ENCODE measurements at regions of chr17 and their contacts with region 1.

Region 1: GRCh38 chr17:1752425-1753262 is 9.2 kb upstream of the SERPINF1 start:
- DNase-seq: no peak
- ATAC-seq: peak; percentile 60
- H3K4me3 ChIP-seq: no peak overlapping the region
- H3K27ac ChIP-seq: peak overlapping the region; percentile 51; the same call in 1 of the 2 replicates
- H3K4me1 ChIP-seq: peaks cover 5% of the 10 kb centered on the region; the same call in 1 of the 2 replicates
- H3K27me3 ChIP-seq: no peaks in the 10 kb centered on the region
- CTCF ChIP-seq: no peak

Region 2: DNA sequence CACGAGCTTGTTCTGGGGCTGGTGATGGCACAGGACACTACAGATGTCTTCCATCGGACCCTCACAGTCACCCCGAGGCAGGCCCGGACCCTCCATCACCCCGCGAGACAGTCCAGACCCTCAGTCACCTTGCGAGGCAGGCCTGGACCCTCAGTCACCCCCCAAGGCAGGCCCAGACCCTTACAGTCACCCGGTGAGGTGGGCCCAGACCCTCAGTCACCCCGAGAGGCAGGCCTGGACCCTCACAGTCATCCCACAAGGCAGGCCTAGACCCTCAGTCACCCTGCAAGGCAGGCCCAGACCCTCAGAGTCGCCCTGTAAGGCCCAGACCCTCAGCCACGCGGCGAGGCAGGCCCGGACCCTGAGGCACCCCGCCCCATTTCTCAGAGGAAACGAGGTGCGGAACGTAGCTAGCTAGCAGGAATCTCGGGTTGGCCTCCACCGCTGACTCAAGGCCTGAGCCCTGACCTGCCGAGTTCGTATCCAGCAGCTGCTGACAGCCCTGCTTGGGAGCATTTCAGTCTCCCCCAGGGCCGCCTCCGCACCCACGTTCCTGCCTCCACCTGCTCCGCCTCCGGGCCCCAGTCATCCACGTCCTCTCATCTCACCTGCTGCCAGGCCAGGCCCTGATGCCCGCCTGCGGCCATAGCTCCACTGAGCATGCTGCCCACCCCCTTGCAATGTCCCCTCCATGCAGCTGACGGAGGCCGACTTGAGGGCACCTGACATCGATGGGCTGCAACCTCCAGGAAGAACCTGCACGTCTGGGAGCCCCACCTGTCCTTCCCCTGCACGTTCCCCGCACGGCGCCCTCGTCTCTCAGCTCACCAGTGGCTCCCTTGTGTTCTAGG is 1428.7 kb before region 1 on chr17:
- CTCF ChIA-PET with region 1: no interaction called
- POLR2A ChIA-PET with region 1: interaction called, 10 read pairs
- in situ Hi-C with region 1: no loop called
- intact Hi-C with region 1: no loop called
- DNase-seq: no peak
- ATAC-seq: no peak
- H3K4me3 ChIP-seq: no peak overlapping the region
- H3K27ac ChIP-seq: no peak overlapping the region
- H3K4me1 ChIP-seq: no peaks in the 10 kb centered on the region
- H3K27me3 ChIP-seq: no peaks in the 10 kb centered on the region
- CTCF ChIP-seq: no peak

Region 3: GRCh38 chr17:1617620-1618174 is 134.9 kb before region 1 on chr17:
- CTCF ChIA-PET with region 1: no interaction called
- POLR2A ChIA-PET with region 1: no interaction called
- in situ Hi-C with region 1: no loop called
- intact Hi-C with region 1: no loop called
- DNase-seq: no peak
- ATAC-seq: no peak
- H3K4me3 ChIP-seq: no peak overlapping the region
- H3K27ac ChIP-seq: no peak overlapping the region
- H3K4me1 ChIP-seq: no peaks in the 10 kb centered on the region
- H3K27me3 ChIP-seq: no peaks in the 10 kb centered on the region
- CTCF ChIP-seq: no peak

Region 4: DNA sequence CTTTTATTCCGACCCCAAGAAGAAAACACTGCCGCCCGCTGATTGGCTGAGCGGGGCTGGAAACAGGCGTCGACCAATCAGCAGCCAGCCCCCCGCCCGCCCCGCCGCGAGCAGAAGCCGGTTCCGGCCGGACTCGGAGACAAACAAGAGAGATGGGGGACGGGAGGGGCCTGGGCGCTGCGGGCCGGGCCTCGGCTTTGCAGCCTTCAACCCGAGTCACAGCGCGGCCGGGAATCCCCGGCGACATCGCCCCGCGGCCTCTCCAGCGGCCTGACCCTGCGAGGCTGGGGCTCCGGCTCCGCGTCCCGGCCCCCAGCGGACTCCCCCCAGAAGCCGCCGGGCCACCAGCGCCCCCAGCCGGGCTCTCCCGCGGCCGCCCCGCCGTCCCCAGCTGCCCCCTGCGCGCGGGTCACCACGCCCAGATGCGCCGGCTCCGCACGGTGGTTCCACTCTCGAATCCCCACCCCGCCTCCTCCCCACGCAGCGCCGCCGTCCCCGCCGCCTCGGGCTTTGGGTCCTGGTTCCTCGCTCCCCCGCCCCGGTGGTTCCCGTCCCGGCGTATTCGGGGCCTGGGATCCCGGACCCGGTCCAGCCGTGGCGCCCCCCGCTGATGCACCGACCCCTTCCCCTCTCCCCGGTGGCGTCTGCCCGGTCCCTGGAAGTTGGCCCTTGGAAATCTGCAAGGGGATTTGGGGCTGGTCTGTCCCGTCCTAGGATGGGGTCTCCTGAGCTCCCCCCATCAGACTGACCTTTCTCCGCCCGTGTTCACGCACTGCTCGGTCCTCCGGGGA is 123.6 kb before region 1 on chr17:
- CTCF ChIA-PET with region 1: no interaction called
- POLR2A ChIA-PET with region 1: no interaction called
- in situ Hi-C with region 1: no loop called
- intact Hi-C with region 1: no loop called
- DNase-seq: no peak
- ATAC-seq: peak; percentile 92
- H3K4me3 ChIP-seq: peak overlapping the region; percentile 68
- H3K27ac ChIP-seq: peak overlapping the region; percentile 44
- H3K4me1 ChIP-seq: peaks cover 8% of the 10 kb centered on the region
- H3K27me3 ChIP-seq: no peaks in the 10 kb centered on the region
- CTCF ChIP-seq: peak; percentile 79; the same call in 1 of the 2 replicates

Region 5: GRCh38 chr17:1776328-1776727 is 23.7 kb after region 1 on chr17:
- CTCF ChIA-PET with region 1: no interaction called
- POLR2A ChIA-PET with region 1: no interaction called
- in situ Hi-C with region 1: no loop called
- intact Hi-C with region 1: no loop called
- DNase-seq: no peak
- ATAC-seq: no peak
- H3K4me3 ChIP-seq: no peak overlapping the region
- H3K27ac ChIP-seq: no peak overlapping the region
- H3K4me1 ChIP-seq: peaks cover 3% of the 10 kb centered on the region; the same call in 1 of the 2 replicates
- H3K27me3 ChIP-seq: no peaks in the 10 kb centered on the region
- CTCF ChIP-seq: no peak

Region 6: GRCh38 chr17:2435181-2435741 is 682.6 kb after region 1 on chr17:
- CTCF ChIA-PET with region 1: no interaction called
- POLR2A ChIA-PET with region 1: no interaction called
- in situ Hi-C with region 1: no loop called
- intact Hi-C with region 1: no loop called
- DNase-seq: no peak
- ATAC-seq: no peak
- H3K4me3 ChIP-seq: no peak overlapping the region
- H3K27ac ChIP-seq: no peak overlapping the region
- H3K4me1 ChIP-seq: no peaks in the 10 kb centered on the region
- H3K27me3 ChIP-seq: no peaks in the 10 kb centered on the region
- CTCF ChIP-seq: no peak